Posterior vena cava (tissue), 2 donors: ENCODE measurements at regions of chr13 and their contacts with region 1.

Region 1: DNA sequence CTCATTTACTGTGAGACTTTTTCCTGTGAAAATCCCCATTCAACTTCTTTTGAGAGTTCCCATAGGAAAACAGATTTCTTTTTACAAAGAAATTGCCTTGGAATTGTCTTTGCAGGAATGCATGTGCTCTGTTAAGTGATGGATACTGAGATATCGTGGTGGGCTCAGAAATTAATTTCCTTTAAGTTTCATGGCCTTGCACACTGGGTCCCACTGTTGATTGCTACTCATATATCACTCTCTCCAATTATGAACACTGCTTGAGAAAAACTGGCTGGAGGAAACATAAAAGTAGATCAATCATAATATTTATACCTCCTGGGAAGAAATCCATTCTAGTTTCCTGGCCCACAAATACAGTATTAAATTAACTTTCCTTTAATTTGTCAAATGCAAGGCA is 131.3 kb downstream of the OXGR1 start:
- DNase-seq: no peak

Region 2: GRCh38 chr13:96835546-96835945 is 27.5 kb before region 1 on chr13:
- intact Hi-C with region 1: loop called in 1 of 2 experiments (anchors 2 kb)
- DNase-seq: no peak